Activated T-helper 2 cell treated with anti-CD3 and anti-CD28 coated beads, Interferon-gamma antibody, Interleukin-2, Interleukin-4, amounts not matched to agents 10 μg/mL and 5 μg/mL and 100 μg/mL, durations not matched to agents 14 hours and 24 hours and 36 hours (primary cell): ENCODE measurements at regions of chr15 and their contacts with region 1.

Region 1: DNA sequence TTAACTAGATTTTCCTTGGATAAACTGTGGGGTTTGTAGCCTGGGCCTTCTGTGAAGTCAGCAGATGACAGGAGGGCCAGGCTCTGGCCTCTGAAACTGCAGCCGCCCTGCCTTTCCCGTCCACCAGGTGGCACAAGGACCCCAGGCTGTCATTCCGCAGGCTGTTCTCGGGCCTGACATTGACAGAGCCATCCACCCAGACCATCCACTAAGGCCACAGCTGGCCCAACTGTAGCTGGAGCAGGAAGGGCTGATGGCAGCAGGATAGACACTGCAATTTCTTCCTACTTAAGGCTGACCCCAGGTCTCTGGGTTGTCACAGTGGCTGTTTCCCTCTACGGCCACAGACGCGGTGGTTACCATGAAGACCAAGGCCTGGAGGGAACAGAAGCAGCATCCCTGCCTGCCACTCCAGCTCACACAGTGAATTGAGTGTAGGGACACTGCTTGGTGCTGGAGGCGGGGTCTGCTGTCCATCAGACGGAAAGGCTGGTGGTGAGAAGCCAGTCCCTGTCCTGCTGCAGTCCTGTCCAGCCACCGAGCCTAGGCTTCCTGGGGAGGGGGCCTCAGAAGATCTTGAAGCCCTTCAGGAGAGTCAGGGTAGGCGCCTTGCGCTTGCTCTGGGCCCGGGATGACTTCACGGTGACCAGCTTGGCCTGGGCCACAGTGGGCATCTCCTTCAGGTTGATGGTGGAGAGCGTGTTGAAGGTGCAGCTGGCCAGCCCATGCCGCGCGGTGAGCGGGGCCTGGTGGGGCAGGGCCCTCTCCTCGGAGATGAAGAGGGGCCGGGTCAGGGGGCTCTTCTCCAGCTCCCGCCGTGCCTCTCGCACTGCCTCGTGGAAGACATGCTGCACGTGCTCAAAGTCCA is 9.4 kb downstream of the SLC51B start:
- DNase-seq: peak; percentile 46
- H3K4me3 Mint-ChIP-seq: no peak overlapping the region
- H3K27ac Mint-ChIP-seq: no peak overlapping the region
- H3K4me1 Mint-ChIP-seq: peaks cover 14% of the 10 kb centered on the region
- H3K27me3 Mint-ChIP-seq: peaks cover 3% of the 10 kb centered on the region

Region 2: GRCh38 chr15:64989416-64990167 is 65.0 kb before region 1 on chr15 and contains the start of gene SPG21:
- intact Hi-C with region 1: no loop called
- DNase-seq: peak; percentile 90
- H3K4me3 Mint-ChIP-seq: peak within 1 kb of the TSS; percentile 100
- H3K27ac Mint-ChIP-seq: peak within 1 kb of the TSS; percentile 90
- H3K4me1 Mint-ChIP-seq: peaks cover 38% of the 10 kb centered on the region
- H3K27me3 Mint-ChIP-seq: no peaks in the 10 kb centered on the region
- total RNA-seq, gene SPG21: 61.4 and 63.1 TPM in 2 replicates

Region 3: GRCh38 chr15:65028921-65029735 is 25.4 kb before region 1 on chr15 and contains the start of gene MTFMT:
- intact Hi-C with region 1: no loop called
- DNase-seq: peak; percentile 84
- H3K4me3 Mint-ChIP-seq: peak within 1 kb of the TSS; percentile 99
- H3K27ac Mint-ChIP-seq: peak within 1 kb of the TSS; percentile 91
- H3K4me1 Mint-ChIP-seq: peaks cover 21% of the 10 kb centered on the region
- H3K27me3 Mint-ChIP-seq: peaks cover 14% of the 10 kb centered on the region
- total RNA-seq, gene MTFMT: 22.7 and 23.4 TPM in 2 replicates

Region 4: GRCh38 chr15:65077981-65078352 is 23.4 kb after region 1 on chr15:
- intact Hi-C with region 1: loop called (anchors 1 kb)
- DNase-seq: peak; percentile 34
- H3K4me3 Mint-ChIP-seq: no peak overlapping the region
- H3K27ac Mint-ChIP-seq: no peak overlapping the region
- H3K4me1 Mint-ChIP-seq: peaks cover 12% of the 10 kb centered on the region
- H3K27me3 Mint-ChIP-seq: peaks cover 27% of the 10 kb centered on the region

Region 5: GRCh38 chr15:65101411-65101890 is 46.9 kb after region 1 on chr15:
- intact Hi-C with region 1: loop called (anchors 1 kb)
- DNase-seq: peak; percentile 35
- H3K4me3 Mint-ChIP-seq: no peak overlapping the region
- H3K27ac Mint-ChIP-seq: no peak overlapping the region
- H3K4me1 Mint-ChIP-seq: peaks cover 5% of the 10 kb centered on the region
- H3K27me3 Mint-ChIP-seq: no peaks in the 10 kb centered on the region

Region 6: DNA sequence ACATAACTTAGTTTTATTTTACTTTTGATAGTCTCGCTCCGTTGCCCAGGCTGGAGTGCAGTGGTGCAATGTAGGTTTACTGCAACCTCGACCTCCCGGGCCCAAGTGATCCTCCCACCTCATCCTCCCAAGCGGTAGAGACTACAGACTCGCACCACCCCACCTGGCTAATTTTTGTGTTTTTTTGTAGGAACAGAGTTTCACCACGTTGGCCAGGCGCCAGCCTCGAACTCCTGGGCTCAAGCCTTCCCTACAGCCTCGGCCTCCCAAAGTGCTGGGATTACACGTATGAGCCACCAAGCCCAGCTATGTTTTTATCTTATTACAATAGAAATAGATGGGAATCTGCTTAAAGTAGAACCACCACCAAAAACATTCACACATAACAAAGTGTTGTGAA is 244.2 kb after region 1 on chr15:
- intact Hi-C with region 1: loop called (anchors 5 kb)
- DNase-seq: no peak
- H3K4me3 Mint-ChIP-seq: peak overlapping the region; percentile 84
- H3K27ac Mint-ChIP-seq: peak overlapping the region; percentile 63
- H3K4me1 Mint-ChIP-seq: peaks cover 18% of the 10 kb centered on the region
- H3K27me3 Mint-ChIP-seq: no peaks in the 10 kb centered on the region

Region 7: GRCh38 chr15:65384895-65385858 is 330.6 kb after region 1 on chr15:
- intact Hi-C with region 1: loop called (anchors 10 kb)
- DNase-seq: peak; percentile 75
- H3K4me3 Mint-ChIP-seq: peak overlapping the region; percentile 85
- H3K27ac Mint-ChIP-seq: peak overlapping the region; percentile 85
- H3K4me1 Mint-ChIP-seq: peaks cover 4% of the 10 kb centered on the region
- H3K27me3 Mint-ChIP-seq: peaks cover 27% of the 10 kb centered on the region